Activated naive CD4-positive, alpha-beta T cell treated with anti-CD3 and anti-CD28 coated beads for 36 hours (primary cell): ENCODE measurements at regions of chr12 and their contacts with region 1.

Region 1: DNA sequence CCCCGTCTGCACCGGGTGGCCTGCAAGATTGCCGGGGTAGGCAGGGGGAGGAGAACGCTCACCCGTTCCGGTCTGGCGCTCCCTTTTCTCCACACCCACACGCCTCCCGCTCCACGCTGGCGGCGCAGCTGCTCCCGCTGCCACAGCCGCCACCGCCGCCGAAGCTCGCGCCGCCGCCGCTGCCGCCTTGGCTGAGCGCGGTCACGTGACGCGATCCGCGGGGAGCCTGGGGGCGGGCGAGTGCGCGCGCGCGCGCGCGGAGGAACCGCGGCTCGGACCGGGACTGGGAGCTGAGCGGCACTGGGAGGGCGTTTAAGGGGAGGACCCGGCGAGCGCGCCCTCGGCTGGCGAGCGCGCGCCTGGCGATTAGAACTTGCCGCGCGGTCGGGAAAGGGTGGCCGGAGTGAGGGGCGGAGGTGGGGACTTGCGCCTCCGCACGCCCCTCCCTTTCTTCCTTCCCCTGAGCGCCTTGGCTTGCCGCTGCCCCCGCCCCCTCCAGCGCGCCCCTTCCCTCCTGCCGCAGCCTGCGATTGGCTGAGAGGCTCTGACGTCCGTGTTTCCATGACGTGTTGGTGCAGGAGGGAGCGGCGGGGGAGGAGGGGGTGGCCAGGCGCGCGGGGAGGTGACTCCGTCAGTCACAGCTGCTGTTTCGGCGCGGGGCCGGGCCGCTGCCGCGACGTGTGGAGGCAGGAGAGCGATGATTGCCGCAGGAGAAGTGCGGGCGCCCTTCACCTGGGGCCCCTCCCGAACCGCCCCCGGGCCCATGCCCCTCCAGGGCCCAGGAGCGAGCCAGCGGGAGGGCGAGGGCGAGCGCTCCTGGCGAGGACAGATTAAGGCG is 738 bp upstream of the ATP2B1 start:
- DNase-seq: peak; percentile 99
- H3K4me3 Mint-ChIP-seq: peak overlapping the region; percentile 79
- H3K27ac Mint-ChIP-seq: peak overlapping the region; percentile 71
- H3K4me1 Mint-ChIP-seq: peaks cover 32% of the 10 kb centered on the region
- H3K27me3 Mint-ChIP-seq: no peaks in the 10 kb centered on the region

Region 2: DNA sequence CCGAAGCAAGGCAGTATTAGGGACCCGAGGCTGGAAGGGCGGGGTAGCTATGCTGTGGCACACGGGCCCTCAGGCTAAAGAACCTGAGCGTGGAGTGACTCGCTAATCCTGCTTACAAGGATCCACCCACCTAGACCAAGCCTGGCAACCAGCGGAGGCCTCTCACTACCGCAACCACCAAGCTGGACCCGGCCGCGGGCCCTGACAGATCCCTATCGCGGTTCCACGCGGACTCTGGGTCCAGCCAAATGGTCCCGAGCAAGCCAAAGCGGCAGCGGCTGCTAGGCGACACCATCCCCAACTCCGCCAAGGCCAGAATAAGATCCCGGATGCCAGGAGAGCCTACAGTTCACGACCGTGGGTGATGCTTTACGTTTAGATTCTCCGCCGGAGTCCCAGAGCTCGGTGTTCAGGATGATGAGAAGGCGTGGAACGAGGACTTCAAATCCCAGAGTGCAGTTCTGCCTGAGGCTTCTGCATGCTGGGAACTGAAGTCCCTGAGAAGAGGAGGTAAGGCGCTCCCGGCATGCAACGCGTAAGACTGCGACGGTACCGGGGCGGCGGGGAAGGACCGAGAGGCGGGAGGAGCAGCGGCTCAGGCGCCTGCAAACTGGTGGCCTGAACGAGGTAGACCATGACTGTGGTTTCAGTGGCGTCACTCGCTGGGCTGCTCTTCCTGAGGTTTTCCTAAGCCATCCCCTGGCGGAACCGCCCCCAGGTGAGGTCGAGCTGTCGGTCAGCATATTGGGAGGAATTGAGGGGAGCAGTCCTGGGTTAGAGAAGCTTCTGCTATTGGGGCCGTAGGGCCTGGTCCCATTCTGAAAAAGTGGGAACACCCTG is 1567.4 kb before region 1 on chr12 and contains the starts of genes CEP290 and TMTC3:
- CTCF ChIA-PET with region 1: no interaction called
- intact Hi-C with region 1: loop called (anchors 1 kb)
- DNase-seq: peak; percentile 95
- H3K4me3 Mint-ChIP-seq: peak within 1 kb of the TSS; percentile 91
- H3K27ac Mint-ChIP-seq: peak within 1 kb of the TSS; percentile 90
- H3K4me1 Mint-ChIP-seq: peaks cover 40% of the 10 kb centered on the region
- H3K27me3 Mint-ChIP-seq: no peaks in the 10 kb centered on the region
- total RNA-seq, gene CEP290: 12.7 to 13.6 TPM
- total RNA-seq, gene TMTC3: 5.2 TPM

Region 3: DNA sequence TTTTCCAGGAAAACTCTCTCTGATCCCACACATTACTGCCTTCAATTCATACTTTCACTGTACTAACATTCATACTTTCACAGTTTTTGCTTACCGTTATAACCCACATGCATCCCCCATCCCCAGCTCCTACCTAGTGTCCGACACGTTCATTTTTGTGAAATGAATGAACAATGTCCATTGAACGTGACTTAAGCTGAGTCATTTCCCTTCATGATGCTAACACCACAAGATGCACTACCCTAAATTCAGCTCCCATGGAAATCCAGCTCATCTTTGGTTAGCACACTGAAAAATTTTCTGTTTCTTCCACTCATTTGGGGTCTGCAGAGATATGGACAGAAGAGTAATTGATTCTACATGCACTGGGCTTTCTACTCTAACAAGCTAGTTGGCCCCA is 269.4 kb before region 1 on chr12:
- CTCF ChIA-PET with region 1: no interaction called
- intact Hi-C with region 1: no loop called
- DNase-seq: no peak
- H3K4me3 Mint-ChIP-seq: no peak overlapping the region
- H3K27ac Mint-ChIP-seq: no peak overlapping the region
- H3K4me1 Mint-ChIP-seq: peaks cover 8% of the 10 kb centered on the region
- H3K27me3 Mint-ChIP-seq: no peaks in the 10 kb centered on the region

Region 4: GRCh38 chr12:89524541-89525285 is 184.7 kb before region 1 on chr12 and contains the start of gene GALNT4:
- CTCF ChIA-PET with region 1: interaction called, 3 read pairs
- intact Hi-C with region 1: loop called (anchors 1 kb)
- DNase-seq: peak; percentile 80
- H3K4me3 Mint-ChIP-seq: peak within 1 kb of the TSS; percentile 94
- H3K27ac Mint-ChIP-seq: peak within 1 kb of the TSS; percentile 93
- H3K4me1 Mint-ChIP-seq: peaks cover 41% of the 10 kb centered on the region
- H3K27me3 Mint-ChIP-seq: no peaks in the 10 kb centered on the region
- total RNA-seq, gene GALNT4: 2.9 to 3.4 TPM

Region 5: GRCh38 chr12:89663577-89664357 is 45.6 kb before region 1 on chr12:
- CTCF ChIA-PET with region 1: interaction called, 6 read pairs
- intact Hi-C with region 1: loop called (anchors 1 kb)
- DNase-seq: peak; percentile 38
- H3K4me3 Mint-ChIP-seq: peak overlapping the region; percentile 16
- H3K27ac Mint-ChIP-seq: peak overlapping the region; percentile 55
- H3K4me1 Mint-ChIP-seq: peaks cover 65% of the 10 kb centered on the region
- H3K27me3 Mint-ChIP-seq: no peaks in the 10 kb centered on the region

Region 6: DNA sequence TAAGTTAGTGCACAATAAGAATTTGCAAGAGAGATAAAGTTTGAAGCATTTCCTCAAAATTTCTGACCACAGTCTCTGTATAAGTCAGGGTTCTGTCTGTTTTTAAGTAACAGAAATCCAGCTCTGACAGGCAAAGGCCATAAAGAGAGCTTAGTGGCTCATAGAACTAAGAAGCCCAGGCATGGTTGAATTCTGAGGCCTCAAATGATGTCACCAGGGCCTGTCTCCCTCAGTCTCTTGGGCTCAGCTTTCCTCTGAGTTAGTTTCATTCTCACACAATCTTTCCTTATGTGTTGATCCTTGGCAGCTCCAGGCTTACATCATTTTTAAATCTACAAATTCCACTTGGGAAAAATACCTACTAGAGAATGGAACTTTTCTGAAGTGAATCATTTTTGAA is 172.7 kb after region 1 on chr12:
- CTCF ChIA-PET with region 1: no interaction called
- intact Hi-C with region 1: loop called (anchors 1 kb)
- DNase-seq: peak; percentile 53
- H3K4me3 Mint-ChIP-seq: no peak overlapping the region
- H3K27ac Mint-ChIP-seq: peak overlapping the region; percentile 63
- H3K4me1 Mint-ChIP-seq: peaks cover 42% of the 10 kb centered on the region
- H3K27me3 Mint-ChIP-seq: no peaks in the 10 kb centered on the region

Region 7: DNA sequence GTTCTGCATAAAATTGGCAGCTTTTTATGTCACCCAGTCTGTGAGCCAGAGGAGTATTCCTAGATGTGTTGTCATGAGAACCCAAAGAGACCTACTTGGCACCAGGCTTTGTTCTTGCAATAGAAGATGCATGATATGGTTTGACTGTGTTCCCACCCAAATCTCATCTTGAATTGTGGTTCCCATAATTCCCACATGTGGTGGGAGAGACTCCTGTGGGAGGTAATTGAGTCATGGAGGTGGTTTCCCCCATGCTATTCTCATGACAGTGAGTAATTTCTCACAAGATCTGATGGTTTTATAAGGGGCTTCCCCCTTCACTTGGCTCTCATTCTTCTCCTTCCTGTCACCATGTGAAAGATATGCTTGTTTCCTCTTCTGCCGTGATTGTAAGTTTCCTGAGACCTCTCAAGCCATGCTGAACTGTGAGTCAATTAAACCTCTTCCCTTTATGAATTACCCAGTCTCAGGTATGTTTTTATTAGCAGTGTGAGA is 571.2 kb after region 1 on chr12:
- CTCF ChIA-PET with region 1: no interaction called
- intact Hi-C with region 1: loop called (anchors 1 kb)
- DNase-seq: peak; percentile 43
- H3K4me3 Mint-ChIP-seq: no peak overlapping the region
- H3K27ac Mint-ChIP-seq: peak overlapping the region; percentile 56
- H3K4me1 Mint-ChIP-seq: peaks cover 17% of the 10 kb centered on the region
- H3K27me3 Mint-ChIP-seq: peaks cover 9% of the 10 kb centered on the region